Naive thymus-derived CD4-positive, alpha-beta T cell (primary cell): ENCODE measurements at regions of chr14 and their contacts with region 1.

Region 1: GRCh38 chr14:50003213-50004031 is 110.5 kb downstream of the ARF6 start:
- DNase-seq: peak; percentile 63 to 84 (median 69)
- ATAC-seq: peak; percentile 62
- H3K4me3 ChIP-seq: peak overlapping the region; percentile 64
- H3K4me3 Mint-ChIP-seq: peak overlapping the region; percentile 74 to 95 (median 90)
- H3K27ac ChIP-seq: peak overlapping the region; percentile 90
- H3K27ac Mint-ChIP-seq: peak overlapping the region; percentile 90 to 99 (median 98)
- H3K4me1 ChIP-seq: peaks cover 47 to 48% of the 10 kb centered on the region in 2 donors
- H3K4me1 Mint-ChIP-seq: peaks cover 40 to 71% (median 63%) of the 10 kb centered on the region in 7 donors
- H3K27me3 ChIP-seq: no peaks in the 10 kb centered on the region
- H3K27me3 Mint-ChIP-seq: no peaks in the 10 kb centered on the region

Region 2: DNA sequence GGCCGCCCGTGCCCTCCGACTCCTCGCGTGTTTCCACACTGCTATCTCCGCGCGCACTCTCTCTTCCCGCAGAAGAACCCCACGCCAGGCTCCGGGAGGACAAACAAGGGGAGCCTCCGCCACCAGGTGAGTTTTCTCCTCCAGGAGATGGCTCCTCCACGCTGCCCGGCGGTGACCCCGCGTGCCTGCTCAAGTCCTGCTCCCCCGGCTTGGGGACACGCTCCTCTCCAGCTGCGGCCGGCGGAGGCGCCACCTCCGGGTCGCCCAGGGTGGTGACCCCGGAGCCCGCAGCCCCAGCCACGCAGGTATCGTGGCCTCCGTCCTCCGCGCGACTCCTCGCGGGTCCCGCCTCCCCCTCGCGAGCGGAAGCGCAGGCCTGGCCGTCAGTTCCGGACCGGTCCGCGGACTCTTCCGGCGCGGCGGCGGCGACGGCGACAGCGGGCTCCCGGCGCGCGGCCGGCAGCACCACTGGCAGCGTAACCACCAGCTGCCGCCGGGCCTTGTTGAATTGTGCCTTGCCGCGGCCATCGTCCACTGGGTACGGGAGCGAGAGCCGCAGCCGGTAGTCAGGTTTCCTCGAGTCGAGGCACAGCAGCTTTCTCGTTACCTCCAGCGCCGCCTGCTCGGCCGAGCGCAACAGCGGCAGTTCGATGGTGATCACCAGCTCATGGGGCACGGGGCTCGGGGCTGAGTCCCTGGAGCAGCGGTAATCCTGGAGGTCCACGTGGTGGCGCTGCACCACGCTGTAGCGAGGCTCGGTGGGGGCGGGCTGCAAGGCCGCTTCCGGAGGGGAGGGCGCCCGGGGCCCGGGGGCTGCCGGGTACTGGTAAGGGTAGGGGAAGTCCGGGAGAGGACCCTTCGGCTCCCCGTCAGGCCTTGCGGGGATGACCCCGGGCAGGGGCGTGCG is 369.5 kb before region 1 on chr14:
- CTCF ChIA-PET with region 1: no interaction called
- POLR2A ChIA-PET with region 1: no interaction called
- intact Hi-C with region 1: loop called in 1 of 2 experiments (anchors 1 kb)
- DNase-seq: peak; percentile 89 to 96 (median 93)
- ATAC-seq: peak; percentile 92
- H3K4me3 ChIP-seq: peak overlapping the region; percentile 99
- H3K4me3 Mint-ChIP-seq: peak overlapping the region; percentile 81 to 99 (median 96)
- H3K27ac ChIP-seq: peak overlapping the region; percentile 96
- H3K27ac Mint-ChIP-seq: peak overlapping the region; percentile 71 to 96 (median 90)
- H3K4me1 ChIP-seq: peaks cover 19 to 29% of the 10 kb centered on the region in 2 donors
- H3K4me1 Mint-ChIP-seq: peaks cover 35 to 71% (median 52%) of the 10 kb centered on the region in 7 donors
- H3K27me3 ChIP-seq: no peaks in the 10 kb centered on the region
- H3K27me3 Mint-ChIP-seq: no peaks in the 10 kb centered on the region

Region 3: GRCh38 chr14:49867831-49868723 is 135.3 kb before region 1 on chr14:
- CTCF ChIA-PET with region 1: interaction called, 40 read pairs
- POLR2A ChIA-PET with region 1: interaction called, 120 read pairs
- intact Hi-C with region 1: loop called (anchors 1 kb)
- DNase-seq: peak; percentile 87 to 97 (median 93)
- ATAC-seq: peak; percentile 96
- H3K4me3 ChIP-seq: peak overlapping the region; percentile 75
- H3K4me3 Mint-ChIP-seq: peak overlapping the region; percentile 79 to 95 (median 90)
- H3K27ac ChIP-seq: peak overlapping the region; percentile 91
- H3K27ac Mint-ChIP-seq: peak overlapping the region; percentile 93 to 99 (median 97)
- H3K4me1 ChIP-seq: peaks cover 31 to 35% of the 10 kb centered on the region in 2 donors
- H3K4me1 Mint-ChIP-seq: peaks cover 9 to 31% (median 17%) of the 10 kb centered on the region in 7 donors
- H3K27me3 ChIP-seq: no peaks in the 10 kb centered on the region
- H3K27me3 Mint-ChIP-seq: no peaks in the 10 kb centered on the region

Region 4: DNA sequence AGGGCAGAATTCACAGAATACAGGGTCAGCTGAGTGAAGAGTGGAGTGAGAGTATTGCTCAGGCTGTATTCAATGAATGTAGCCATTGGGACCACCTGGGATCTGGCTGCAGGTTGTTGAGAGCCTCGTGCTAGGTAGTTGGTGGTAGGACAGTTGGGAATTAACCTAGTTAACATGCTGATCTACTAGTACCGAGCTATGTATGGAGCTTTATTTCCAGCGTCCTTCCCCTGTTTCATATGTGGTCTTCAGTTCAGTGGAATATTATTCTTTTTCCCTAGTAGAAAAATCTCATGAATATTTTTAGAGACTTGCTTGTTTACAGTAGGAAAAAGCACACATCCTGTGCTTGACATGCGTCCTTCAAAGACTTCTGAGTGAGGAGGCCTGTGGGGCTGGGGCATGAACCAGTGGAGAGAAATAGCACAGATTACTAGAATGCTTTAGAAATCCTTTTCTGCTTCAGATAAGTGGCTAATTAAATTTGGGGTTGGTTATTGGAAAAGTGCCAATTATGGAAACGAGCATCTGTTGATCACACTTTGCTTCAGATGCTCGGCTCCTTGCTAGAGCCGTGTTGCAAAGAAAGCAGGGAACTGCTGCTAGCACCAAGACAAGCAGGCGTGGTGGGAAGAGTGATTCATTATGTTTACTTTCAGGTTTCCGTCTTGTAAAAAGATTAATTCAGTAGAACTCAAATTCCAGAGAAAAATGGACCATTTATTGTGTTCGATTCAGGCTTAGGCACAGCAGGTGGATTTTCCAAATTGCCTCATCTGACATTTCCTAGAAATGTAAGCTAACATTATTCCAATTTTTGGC is 56.9 kb before region 1 on chr14:
- CTCF ChIA-PET with region 1: interaction called, 3 read pairs
- POLR2A ChIA-PET with region 1: interaction called, 43 read pairs
- intact Hi-C with region 1: loop called (anchors 1 kb)
- DNase-seq: peak in 7 of 9 donors; percentile 30 to 55 (median 43)
- ATAC-seq: peak; percentile 71
- H3K4me3 ChIP-seq: peak overlapping the region; percentile 36
- H3K4me3 Mint-ChIP-seq: peak overlapping the region; percentile 43 to 81 (median 74)
- H3K27ac ChIP-seq: peak overlapping the region; percentile 66
- H3K27ac Mint-ChIP-seq: peak overlapping the region; percentile 82 to 98 (median 94)
- H3K4me1 ChIP-seq: peaks cover 28 to 46% of the 10 kb centered on the region in 2 donors
- H3K4me1 Mint-ChIP-seq: peaks cover 26 to 86% (median 77%) of the 10 kb centered on the region in 7 donors
- H3K27me3 ChIP-seq: no peaks in the 10 kb centered on the region
- H3K27me3 Mint-ChIP-seq: no peaks in the 10 kb centered on the region

Region 5: GRCh38 chr14:49982501-49982951 is 20.9 kb before region 1 on chr14:
- CTCF ChIA-PET with region 1: interaction called, 4 read pairs
- POLR2A ChIA-PET with region 1: interaction called, 188 read pairs
- intact Hi-C with region 1: loop called in 1 of 2 experiments (anchors 1 kb)
- DNase-seq: no peak
- ATAC-seq: peak; percentile 26
- H3K4me3 ChIP-seq: no peak overlapping the region
- H3K4me3 Mint-ChIP-seq: peak overlapping the region in 4 of 10 donors; percentile 13 to 58 (median 20)
- H3K27ac ChIP-seq: no peak overlapping the region
- H3K27ac Mint-ChIP-seq: peak overlapping the region in 7 of 9 donors; percentile 18 to 99 (median 79)
- H3K4me1 ChIP-seq: peaks cover 19 to 39% of the 10 kb centered on the region in 2 donors
- H3K4me1 Mint-ChIP-seq: peaks cover 43 to 78% (median 68%) of the 10 kb centered on the region in 7 donors
- H3K27me3 ChIP-seq: no peaks in the 10 kb centered on the region
- H3K27me3 Mint-ChIP-seq: no peaks in the 10 kb centered on the region

Region 6: GRCh38 chr14:50060871-50061663 is 57.6 kb after region 1 on chr14:
- CTCF ChIA-PET with region 1: interaction called, 31 read pairs
- POLR2A ChIA-PET with region 1: interaction called, 49 read pairs
- intact Hi-C with region 1: loop called (anchors 1 kb)
- DNase-seq: peak in 2 of 9 donors; percentile 27 to 61
- ATAC-seq: no peak
- H3K4me3 ChIP-seq: peak overlapping the region; percentile 53
- H3K4me3 Mint-ChIP-seq: peak overlapping the region; percentile 74 to 94 (median 89)
- H3K27ac ChIP-seq: peak overlapping the region; percentile 79
- H3K27ac Mint-ChIP-seq: peak overlapping the region; percentile 96 to 100 (median 99)
- H3K4me1 ChIP-seq: peaks cover 61 to 69% of the 10 kb centered on the region in 2 donors
- H3K4me1 Mint-ChIP-seq: peaks cover 70 to 93% (median 89%) of the 10 kb centered on the region in 7 donors
- H3K27me3 ChIP-seq: no peaks in the 10 kb centered on the region
- H3K27me3 Mint-ChIP-seq: no peaks in the 10 kb centered on the region

Region 7: DNA sequence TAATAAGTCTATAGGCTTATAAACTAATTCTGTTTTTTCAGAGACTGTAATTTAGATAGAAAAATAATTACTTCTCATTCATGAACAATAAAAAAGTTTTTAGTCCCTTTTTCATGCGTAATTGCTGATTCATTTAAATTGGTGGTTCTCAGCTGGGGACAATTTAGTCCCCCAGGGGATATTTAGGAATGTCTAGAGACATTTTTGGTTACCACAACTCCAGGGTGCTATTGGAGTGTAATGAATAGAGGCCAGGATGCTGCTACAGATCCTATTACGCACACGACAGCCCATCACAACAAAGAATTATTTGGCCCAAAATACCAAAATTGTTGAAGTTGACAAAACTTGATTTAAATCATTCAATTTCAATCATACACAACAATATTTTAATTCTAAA is 135.8 kb after region 1 on chr14:
- CTCF ChIA-PET with region 1: no interaction called
- POLR2A ChIA-PET with region 1: no interaction called
- intact Hi-C with region 1: no loop called
- DNase-seq: no peak
- ATAC-seq: no peak
- H3K4me3 ChIP-seq: no peak overlapping the region
- H3K4me3 Mint-ChIP-seq: no peak overlapping the region
- H3K27ac ChIP-seq: no peak overlapping the region
- H3K27ac Mint-ChIP-seq: no peak overlapping the region
- H3K4me1 ChIP-seq: no peaks in the 10 kb centered on the region
- H3K4me1 Mint-ChIP-seq: no peaks in the 10 kb centered on the region
- H3K27me3 ChIP-seq: no peaks in the 10 kb centered on the region
- H3K27me3 Mint-ChIP-seq: no peaks in the 10 kb centered on the region

Region 8: DNA sequence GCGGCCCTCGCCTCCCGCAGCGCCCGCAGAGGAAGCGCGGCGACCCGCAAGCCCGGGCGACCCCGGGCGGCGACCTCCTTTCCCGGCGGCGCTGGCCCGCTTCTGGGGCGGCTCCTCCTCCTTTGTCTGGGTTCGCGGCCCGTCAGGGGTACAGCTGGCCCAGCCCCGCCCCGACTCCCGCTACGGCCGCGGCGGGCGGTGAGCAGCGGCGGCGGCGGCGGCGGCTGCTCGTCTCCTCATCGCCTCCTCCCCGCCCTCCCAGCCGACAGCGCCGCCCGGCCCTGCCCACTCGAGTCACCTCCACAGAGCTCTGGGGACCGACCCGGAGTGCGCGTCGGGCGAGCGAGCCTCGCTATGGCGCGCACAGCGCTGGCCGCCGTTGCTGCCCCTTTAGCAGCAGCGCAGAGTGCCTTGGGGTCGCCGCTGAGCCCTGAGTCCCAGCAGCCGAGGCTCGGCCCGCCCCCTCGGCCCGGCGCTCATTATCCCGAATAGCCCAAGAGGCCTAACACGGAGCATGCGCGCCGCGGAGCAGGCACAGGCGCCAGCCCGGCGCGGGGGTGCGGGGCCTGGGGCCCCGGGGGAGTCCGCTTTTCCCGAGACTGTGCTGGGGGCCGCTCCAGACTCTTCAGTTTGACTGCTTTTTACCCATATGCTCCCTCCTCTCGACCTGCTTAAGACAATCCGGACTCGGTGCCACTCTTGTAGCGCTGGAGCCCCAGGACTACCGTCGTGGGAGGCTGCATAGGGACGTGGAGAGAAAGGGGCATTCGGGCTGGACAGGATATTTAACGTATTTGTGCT is 228.3 kb after region 1 on chr14 and contains the start of gene SOS2:
- CTCF ChIA-PET with region 1: no interaction called
- POLR2A ChIA-PET with region 1: no interaction called
- intact Hi-C with region 1: loop called (anchors 2 kb)
- DNase-seq: peak; percentile 71 to 84 (median 80)
- ATAC-seq: peak; percentile 92
- H3K4me3 ChIP-seq: peak within 1 kb of the TSS; percentile 89
- H3K4me3 Mint-ChIP-seq: peak within 1 kb of the TSS; percentile 80 to 97 (median 91)
- H3K27ac ChIP-seq: peak within 1 kb of the TSS; percentile 81
- H3K27ac Mint-ChIP-seq: peak within 1 kb of the TSS; percentile 90 to 96 (median 95)
- H3K4me1 ChIP-seq: peaks cover 6 to 17% of the 10 kb centered on the region in 2 donors
- H3K4me1 Mint-ChIP-seq: peaks cover 19 to 47% (median 42%) of the 10 kb centered on the region in 7 donors
- H3K27me3 ChIP-seq: no peaks in the 10 kb centered on the region
- H3K27me3 Mint-ChIP-seq: no peaks in the 10 kb centered on the region
- total RNA-seq, gene SOS2: 19.7 to 49.6 (median 38.7) TPM

Region 9: GRCh38 chr14:50773632-50774541 is 770.5 kb after region 1 on chr14:
- CTCF ChIA-PET with region 1: no interaction called
- POLR2A ChIA-PET with region 1: no interaction called
- intact Hi-C with region 1: no loop called
- DNase-seq: peak in 1 of 9 donors; percentile 38
- ATAC-seq: peak; percentile 65
- H3K4me3 ChIP-seq: no peak overlapping the region
- H3K4me3 Mint-ChIP-seq: peak overlapping the region in 3 of 10 donors; percentile 1 to 27 (median 18)
- H3K27ac ChIP-seq: no peak overlapping the region
- H3K27ac Mint-ChIP-seq: peak overlapping the region in 8 of 9 donors; percentile 1 to 78 (median 37)
- H3K4me1 ChIP-seq: peaks cover 9 to 13% of the 10 kb centered on the region in 2 donors
- H3K4me1 Mint-ChIP-seq: peaks cover 17 to 41% (median 28%) of the 10 kb centered on the region in 7 donors
- H3K27me3 ChIP-seq: no peaks in the 10 kb centered on the region
- H3K27me3 Mint-ChIP-seq: no peaks in the 10 kb centered on the region